ENCODE measurements at regions of chr15 and their contacts with region 1.

Region 1: GRCh38 chr15:42273102-42273899 is at the starts of genes GANC and TMEM87A:
- DNase-seq: peak; percentile 90 to 99 (median 94)
- ATAC-seq: peak; percentile 89
- H3K4me3 ChIP-seq: peak within 1 kb of the TSS; percentile 70
- H3K4me3 Mint-ChIP-seq: peak within 1 kb of the TSS; percentile 90
- H3K27ac ChIP-seq: peak within 1 kb of the TSS; percentile 92 to 95
- H3K27ac Mint-ChIP-seq: peak within 1 kb of the TSS; percentile 98
- H3K4me1 ChIP-seq: peaks cover 12% of the 10 kb centered on the region
- H3K4me1 Mint-ChIP-seq: peaks cover 76% of the 10 kb centered on the region
- H3K27me3 ChIP-seq: no peaks in the 10 kb centered on the region
- H3K27me3 Mint-ChIP-seq: no peaks in the 10 kb centered on the region
- CTCF ChIP-seq: no peak
- total RNA-seq, gene GANC: 22.3 to 23.9 TPM
- total RNA-seq, gene TMEM87A: 48.7 to 51.4 TPM

Region 2: DNA sequence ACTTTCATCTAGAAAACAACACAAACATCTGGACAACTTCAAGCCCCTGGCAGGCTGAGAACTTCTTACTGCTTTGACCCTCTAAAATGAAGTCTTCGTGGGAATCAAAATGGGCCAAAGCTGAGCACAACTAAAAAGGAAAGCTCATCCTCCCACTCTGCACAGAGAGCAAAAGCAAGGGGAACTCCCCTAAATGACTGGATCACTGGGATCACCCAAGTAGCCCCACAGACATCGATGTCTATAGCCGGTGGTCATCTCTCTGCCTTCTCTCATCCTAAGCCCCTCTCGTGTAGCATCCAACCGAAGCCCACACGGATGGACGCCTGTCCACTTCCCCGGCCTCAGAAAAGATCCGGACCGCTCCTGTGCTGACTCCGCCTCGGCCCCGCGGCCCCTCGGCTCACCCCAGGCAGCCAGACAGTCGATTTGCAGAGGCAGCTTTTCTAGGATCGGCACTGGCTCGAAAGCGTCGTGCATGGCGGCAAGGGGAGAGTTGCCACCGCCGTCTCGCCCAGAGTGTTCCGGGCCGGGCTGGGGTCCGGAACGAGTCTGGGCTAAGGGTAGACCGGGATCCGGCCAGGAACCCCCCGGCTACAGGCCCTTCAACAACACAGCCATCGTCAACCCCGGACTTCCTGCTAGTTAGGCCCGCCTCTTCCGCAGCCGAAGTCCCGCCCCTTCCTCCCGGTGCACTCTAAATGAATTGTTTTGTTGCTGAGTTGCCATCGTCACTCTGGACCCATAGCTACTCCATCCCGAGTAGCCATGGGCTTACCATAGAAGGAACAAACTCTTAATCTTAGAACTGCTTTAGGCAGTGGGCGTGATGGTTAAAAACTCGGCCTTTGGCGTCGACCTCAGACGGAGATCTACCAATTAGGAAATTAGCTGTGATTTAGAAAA is 65.4 kb before region 1 on chr15 and contains the start of gene VPS39:
- CTCF ChIA-PET with region 1: no interaction called
- POLR2A ChIA-PET with region 1: interaction called, 40 read pairs
- intact Hi-C with region 1: loop called (anchors 1 to 5 kb)
- DNase-seq: peak; percentile 73 to 91 (median 78)
- ATAC-seq: peak; percentile 98
- H3K4me3 ChIP-seq: peak within 1 kb of the TSS; percentile 91
- H3K4me3 Mint-ChIP-seq: peak within 1 kb of the TSS; percentile 82
- H3K27ac ChIP-seq: peak within 1 kb of the TSS; percentile 64 to 75
- H3K27ac Mint-ChIP-seq: peak within 1 kb of the TSS; percentile 77
- H3K4me1 ChIP-seq: peaks cover 31% of the 10 kb centered on the region
- H3K4me1 Mint-ChIP-seq: peaks cover 47% of the 10 kb centered on the region
- H3K27me3 ChIP-seq: no peaks in the 10 kb centered on the region
- H3K27me3 Mint-ChIP-seq: no peaks in the 10 kb centered on the region
- CTCF ChIP-seq: no peak
- total RNA-seq, gene VPS39: 73.4 to 82.5 TPM

Region 3: DNA sequence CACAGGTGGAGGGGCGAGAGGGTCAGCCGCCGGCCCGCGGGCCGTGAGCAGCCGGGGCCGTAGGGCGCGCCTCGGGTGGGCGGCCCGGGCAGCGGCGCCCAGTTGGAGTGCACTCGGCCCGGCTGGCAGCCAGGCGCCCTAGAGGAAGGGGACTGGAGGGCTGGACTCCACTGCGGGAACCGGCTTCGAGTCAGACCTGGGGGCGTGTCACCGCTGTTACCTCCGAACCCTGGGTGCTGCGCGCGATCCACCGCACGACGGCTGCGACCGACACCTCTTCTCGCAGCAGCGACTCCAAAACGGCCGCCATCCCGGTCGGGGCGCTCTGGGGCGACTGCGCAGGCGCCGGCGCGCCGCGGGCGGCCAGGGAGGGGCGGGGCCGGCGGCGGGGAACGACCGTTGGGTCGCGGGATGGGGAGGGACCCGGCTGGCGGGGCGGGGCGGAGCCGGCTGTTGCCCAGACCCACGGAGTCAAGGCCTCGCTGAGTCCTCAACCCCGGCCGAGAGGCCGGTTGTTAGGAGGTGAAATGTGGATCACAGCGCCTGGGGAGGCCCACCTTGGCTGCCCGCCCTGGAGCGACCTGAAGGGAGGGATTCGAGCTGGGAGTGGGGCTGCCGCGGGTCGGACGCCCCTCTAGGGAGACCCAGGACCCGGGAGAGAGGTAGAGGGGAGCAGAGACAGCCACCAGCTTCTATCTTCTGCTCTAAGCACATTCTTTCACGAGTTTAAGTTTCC is 463.7 kb after region 1 on chr15 and contains the start of gene CDAN1:
- CTCF ChIA-PET with region 1: no interaction called
- POLR2A ChIA-PET with region 1: no interaction called
- intact Hi-C with region 1: loop called in 1 of 2 experiments (anchors 5 kb)
- DNase-seq: peak; percentile 84 to 97 (median 92)
- ATAC-seq: peak; percentile 91
- H3K4me3 ChIP-seq: peak within 1 kb of the TSS; percentile 65
- H3K4me3 Mint-ChIP-seq: peak within 1 kb of the TSS; percentile 93
- H3K27ac ChIP-seq: peak within 1 kb of the TSS; percentile 64 to 69
- H3K27ac Mint-ChIP-seq: peak within 1 kb of the TSS; percentile 88
- H3K4me1 ChIP-seq: peaks cover 25% of the 10 kb centered on the region
- H3K4me1 Mint-ChIP-seq: peaks cover 18% of the 10 kb centered on the region
- H3K27me3 ChIP-seq: no peaks in the 10 kb centered on the region
- H3K27me3 Mint-ChIP-seq: no peaks in the 10 kb centered on the region
- CTCF ChIP-seq: no peak
- total RNA-seq, gene CDAN1: 23.2 to 24.7 TPM

Measured in CD4-positive, alpha-beta T cell (primary cell).